HEK293T (cell line): ENCODE measurements at regions of chr1 and their contacts with region 1.

Region 1: DNA sequence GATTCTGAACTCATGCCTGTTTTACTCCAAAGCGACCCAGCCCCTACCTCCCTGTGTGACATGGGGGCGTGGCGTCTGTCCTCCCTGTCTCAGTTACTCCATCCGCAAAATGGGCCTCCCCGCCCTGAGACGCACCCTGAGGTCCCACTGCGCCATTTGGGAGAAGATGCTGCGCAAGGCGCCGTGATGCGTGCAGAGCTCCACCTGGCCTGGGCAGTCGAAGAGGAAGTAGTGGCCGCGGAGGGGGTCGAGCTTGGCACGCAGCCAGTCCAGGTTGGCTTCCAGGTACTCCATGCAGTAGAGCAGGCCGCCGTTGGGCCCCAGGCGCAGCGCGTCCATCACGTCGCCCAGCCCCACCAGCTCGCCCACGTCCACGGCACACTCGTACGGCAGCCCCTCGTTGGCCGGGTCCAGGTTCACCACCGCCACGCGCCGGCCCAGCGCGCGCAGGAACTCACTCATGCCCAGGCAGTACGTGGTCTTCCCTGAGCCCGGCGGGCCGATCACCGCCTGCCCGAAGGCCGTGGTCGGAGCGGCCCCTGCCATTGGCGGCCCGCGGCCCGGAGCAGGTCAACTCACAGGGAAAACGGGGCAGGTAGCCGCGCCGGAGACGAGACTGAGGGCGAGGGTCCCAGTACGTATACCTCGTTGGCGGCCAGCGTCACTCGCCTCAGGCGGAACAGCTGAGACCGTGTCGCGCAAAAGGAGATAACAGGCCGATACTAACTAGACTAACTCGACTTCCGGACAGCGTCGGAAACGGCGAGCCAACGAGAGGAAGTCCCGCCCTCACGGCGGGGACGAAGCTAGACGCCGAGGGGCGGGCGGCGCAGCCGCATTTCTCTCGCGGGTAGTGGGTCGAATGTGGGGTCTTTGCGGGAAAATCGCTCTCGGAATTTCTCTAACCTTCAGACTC is at the start of gene GPN2:
- DNase-seq: peak; percentile 88

Region 2: DNA sequence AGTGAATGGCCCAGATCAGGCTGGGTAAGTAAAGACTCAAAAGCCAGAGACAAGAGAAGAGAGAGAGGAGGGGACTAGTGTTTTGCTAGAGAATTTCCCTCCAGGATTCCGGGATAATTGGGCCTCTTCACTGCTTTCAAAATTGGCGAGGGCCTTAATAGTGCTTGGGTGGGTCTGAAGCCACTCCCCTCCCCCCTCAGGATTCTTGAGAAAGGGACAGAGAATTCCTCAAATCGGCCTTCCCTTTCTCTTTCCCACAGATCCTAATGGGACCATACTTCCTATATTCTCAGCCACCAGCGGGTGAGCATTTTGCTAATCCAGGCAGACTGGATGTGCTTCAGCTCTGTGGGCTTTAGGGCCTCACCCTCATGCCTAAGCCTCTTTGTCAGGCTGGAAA is 14.9 kb before region 1 on chr1:
- CTCF ChIA-PET with region 1: no interaction called
- POLR2A ChIA-PET with region 1: interaction called, 14 read pairs
- DNase-seq: no peak

Region 3: DNA sequence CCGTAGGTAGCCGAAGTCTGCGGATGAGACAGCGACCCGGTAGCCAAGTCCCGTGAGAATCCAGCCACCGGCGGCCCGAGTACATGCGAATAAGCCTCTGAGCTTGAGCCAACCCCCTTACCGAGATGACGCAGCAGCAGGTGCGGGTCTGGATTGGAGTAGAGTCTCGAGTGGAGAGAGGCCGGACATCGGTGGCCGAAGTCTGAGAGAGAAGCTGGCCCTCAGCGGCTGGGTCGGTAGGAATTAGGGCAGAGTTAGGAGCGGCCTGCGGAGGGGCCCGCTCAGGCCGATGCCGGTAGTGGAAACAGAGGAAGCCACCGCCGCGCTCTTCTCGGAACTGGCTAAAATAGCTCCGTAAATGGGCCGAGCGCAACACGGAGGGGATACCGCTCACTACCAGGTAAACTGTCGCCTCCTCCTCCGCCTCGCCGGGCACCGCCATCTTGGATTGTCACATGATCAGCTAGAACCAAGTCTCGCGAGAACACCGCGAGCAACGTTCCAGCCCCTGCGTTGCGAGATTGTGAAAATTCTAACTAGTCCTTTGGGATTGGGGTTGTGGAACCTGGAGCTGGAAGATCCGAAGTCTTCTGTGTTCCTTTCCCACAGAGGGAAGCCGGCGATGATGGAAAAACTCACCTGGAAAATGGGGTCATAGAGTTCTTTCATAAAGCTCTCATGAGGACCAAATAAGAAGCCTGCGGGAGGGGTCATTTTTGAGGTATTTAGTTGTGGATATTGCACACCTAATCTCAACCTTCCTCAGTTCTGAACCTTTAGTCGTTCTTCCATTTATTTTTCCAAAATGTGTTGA is 10.4 kb after region 1 on chr1 and contains the start of gene GPATCH3:
- CTCF ChIA-PET with region 1: interaction called, 7 read pairs
- POLR2A ChIA-PET with region 1: interaction called, 64 read pairs
- DNase-seq: peak; percentile 94

Region 4: DNA sequence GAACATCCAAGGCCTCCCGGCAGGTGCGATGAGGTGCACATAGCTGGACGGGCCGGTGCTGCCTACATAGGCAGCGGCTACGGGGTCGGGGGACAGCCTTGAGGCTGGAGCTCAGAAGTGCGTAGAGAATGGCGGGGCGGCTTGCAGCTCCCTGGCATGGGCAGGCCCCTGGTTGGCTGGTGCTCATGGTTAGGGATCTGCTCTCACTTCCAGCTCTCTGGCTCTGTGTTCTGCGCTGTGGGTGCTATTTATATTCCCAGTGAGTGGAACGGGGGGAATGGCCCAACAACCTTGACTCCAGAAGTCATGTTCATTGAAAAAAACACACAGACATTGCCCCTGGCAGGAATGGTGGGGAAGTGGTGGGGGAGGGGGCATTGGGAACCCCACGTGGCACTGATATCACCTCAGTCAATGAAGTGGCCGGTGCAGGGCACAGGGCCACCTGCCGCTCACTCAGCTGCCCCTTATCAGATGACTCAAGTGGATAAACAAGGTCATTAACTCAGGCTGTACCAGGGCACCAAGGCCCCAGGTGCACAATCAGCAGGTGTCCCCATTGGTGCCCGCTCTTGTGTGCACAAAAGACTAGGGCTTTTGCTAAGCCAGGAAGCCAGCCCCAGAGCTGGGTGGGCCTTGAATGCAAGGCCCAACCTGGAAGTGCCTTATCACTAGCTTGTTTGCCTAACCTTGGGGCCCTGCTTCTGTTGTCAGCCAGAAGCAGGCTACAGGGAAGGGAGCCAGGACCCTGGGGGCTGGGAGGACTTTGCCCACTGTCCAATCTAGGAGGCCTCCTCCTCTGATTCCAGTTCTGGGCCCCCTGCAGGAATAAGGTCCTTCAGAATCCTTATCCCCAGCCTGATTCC is 24.2 kb after region 1 on chr1 and contains the start of gene NR0B2:
- CTCF ChIA-PET with region 1: no interaction called
- POLR2A ChIA-PET with region 1: interaction called, 13 read pairs
- DNase-seq: no peak